Psoas muscle (tissue), 8 donors: ENCODE measurements at regions of chr7 and their contacts with region 1.

Region 1: GRCh38 chr7:24819916-24820689 is 62.8 kb upstream of the GSDME start:
- DNase-seq: peak; percentile 77 to 86
- ATAC-seq: peak; percentile 91 to 95 (median 94)
- H3K4me3 ChIP-seq: no peak overlapping the region
- H3K27ac ChIP-seq: no peak overlapping the region
- H3K4me1 ChIP-seq: peaks cover 8% of the 10 kb centered on the region
- H3K27me3 ChIP-seq: no peaks in the 10 kb centered on the region
- CTCF ChIP-seq: peak; percentile 85

Region 2: GRCh38 chr7:24617957-24618616 is 202.0 kb before region 1 on chr7:
- intact Hi-C with region 1: no loop called
- DNase-seq: no peak
- ATAC-seq: peak in 2 of 4 donors; percentile 19 to 66
- H3K4me3 ChIP-seq: no peak overlapping the region
- H3K27ac ChIP-seq: no peak overlapping the region
- H3K4me1 ChIP-seq: peaks cover 5% of the 10 kb centered on the region
- H3K27me3 ChIP-seq: no peaks in the 10 kb centered on the region
- CTCF ChIP-seq: no peak

Region 3: DNA sequence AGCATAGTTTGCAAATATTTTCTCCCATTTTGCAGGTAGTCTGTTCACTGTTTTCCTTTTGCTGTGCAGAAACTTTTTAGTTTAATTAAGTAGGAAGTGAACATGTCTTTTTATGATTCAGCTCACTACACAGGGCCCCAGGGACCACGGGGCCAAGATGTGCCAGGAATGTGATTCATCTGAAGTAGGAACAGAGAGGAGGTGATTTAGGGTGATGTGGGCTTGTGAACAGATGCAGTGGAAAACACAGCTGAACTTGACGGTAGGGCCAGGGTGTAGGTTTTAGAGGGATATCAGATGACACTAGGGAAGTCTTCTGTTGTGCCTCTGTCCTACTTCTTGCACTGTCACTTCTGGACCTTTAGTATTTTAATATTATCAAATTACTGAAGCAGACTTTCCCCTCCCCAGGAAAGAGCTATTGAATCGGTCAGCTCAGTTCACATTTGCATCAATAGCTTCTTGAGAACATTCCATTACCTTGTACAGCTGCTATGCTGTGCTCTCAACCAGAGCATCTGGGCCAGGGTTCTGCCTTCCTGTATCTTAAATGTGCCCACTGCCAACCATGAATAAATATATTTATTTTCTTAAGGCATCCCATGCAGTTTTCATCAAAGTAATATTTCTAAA is 63.0 kb after region 1 on chr7:
- intact Hi-C with region 1: loop called in 1 of 2 experiments (anchors 5 kb)
- DNase-seq: peak; percentile 72 to 84
- ATAC-seq: peak; percentile 78 to 91 (median 87)
- H3K4me3 ChIP-seq: no peak overlapping the region
- H3K27ac ChIP-seq: peak overlapping the region; percentile 47
- H3K4me1 ChIP-seq: peaks cover 31% of the 10 kb centered on the region
- H3K27me3 ChIP-seq: no peaks in the 10 kb centered on the region
- CTCF ChIP-seq: no peak

Region 4: DNA sequence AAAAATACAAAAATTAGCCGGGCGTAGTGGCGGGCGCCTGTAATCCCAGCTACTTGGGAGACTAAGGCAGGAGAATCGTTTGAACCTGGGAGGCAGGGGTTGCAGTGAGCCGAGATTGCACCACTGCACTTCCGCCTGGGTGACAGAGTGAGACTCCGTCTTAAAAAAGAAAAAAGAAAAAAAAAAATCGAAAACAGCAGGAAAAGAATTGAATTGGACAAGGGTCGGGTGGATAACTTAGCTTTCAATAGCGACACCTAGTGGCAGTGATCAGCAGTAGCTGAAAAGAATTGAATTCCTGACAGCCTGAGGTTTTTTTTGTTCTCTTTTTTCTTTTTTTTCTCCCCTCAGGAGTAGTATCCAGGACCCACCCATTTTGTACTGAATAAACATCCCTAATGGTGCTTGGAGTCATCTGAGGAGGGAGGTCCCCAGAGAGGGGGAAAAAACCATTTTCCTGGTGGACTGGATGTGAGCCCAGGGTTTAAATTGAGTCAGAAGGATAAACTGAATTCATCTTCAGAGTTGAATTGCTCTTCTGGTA is 249.9 kb after region 1 on chr7:
- intact Hi-C with region 1: loop called (anchors 2 kb)
- DNase-seq: peak; percentile 33 to 66
- ATAC-seq: peak; percentile 48 to 88 (median 59)
- H3K4me3 ChIP-seq: peak overlapping the region; percentile 65
- H3K27ac ChIP-seq: no peak overlapping the region
- H3K4me1 ChIP-seq: no peaks in the 10 kb centered on the region
- H3K27me3 ChIP-seq: no peaks in the 10 kb centered on the region
- CTCF ChIP-seq: peak; percentile 94